Heart right ventricle (tissue), 16 donors: ENCODE measurements at regions of chr3 and their contacts with region 1.

Region 1: DNA sequence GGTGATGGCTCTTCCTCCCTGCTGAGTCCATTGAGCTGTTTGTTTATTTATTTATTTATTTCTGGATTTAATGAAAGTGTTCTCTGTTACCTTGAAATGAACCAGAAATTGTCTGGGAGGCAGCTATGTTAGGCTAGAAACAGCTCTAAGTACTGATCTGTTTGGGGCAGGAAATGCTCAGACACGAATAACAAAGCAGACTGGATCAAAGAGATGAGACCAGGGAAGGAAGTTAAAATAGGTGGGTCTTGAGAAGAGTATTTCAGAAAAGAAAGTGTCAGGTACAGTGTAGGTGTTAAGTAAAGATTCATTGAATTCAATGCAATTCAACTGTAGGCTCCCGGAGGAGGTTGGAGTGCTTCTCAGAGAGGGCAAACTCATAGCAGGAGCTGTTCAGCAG is 173.3 kb downstream of the IL20RB start:
- DNase-seq: no peak
- ATAC-seq: no peak
- H3K4me3 ChIP-seq: no peak overlapping the region
- H3K27ac ChIP-seq: no peak overlapping the region
- H3K4me1 ChIP-seq: no peaks in the 10 kb centered on the region
- H3K27me3 ChIP-seq: peaks cover 0 to 6% (median 0%) of the 10 kb centered on the region in 7 donors
- CTCF ChIP-seq: no peak

Region 2: DNA sequence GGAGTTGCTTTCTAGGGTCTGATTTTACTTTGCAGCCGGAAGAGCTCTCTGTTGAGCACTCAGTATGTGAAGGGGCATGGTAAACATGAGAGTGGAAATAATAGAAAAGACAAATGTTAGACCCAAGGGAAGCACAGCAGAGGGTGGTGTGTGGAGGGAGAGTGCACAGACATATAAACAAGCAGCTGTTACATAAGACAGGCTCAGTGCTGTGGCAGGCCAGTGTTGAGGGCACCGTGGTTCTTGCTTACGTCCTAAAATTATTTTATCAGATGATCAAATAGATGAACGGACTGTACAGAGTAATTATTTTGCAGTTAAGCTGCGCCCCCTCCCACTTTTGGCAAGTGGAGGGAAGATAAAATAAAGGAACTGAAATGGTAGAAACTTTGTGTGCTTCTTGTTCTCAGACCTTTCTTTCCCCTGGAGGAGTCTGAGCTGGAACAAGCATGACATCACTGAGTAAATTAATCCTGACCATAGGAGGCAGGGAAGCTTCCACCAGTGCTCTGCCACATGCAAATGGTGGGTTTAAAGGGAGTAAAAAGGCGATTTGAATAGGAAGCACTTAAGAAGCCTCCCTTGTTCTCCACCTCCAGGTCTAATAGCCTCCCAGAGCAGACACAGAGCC is 32.3 kb after region 1 on chr3:
- intact Hi-C with region 1: loop called in 1 of 10 experiments (anchors 2 kb)
- DNase-seq: peak in 1 of 2 donors; percentile 16
- ATAC-seq: peak; percentile 79 to 94 (median 89)
- H3K4me3 ChIP-seq: peak overlapping the region in 2 of 10 donors; percentile 4 to 21
- H3K27ac ChIP-seq: peak overlapping the region in 5 of 10 donors; percentile 47 to 80 (median 75)
- H3K4me1 ChIP-seq: peaks cover 0 to 23% (median 8%) of the 10 kb centered on the region in 9 donors
- H3K27me3 ChIP-seq: no peaks in the 10 kb centered on the region
- CTCF ChIP-seq: no peak